Mammary epithelial cell (primary cell): ENCODE measurements at regions of chr18 and their contacts with region 1.

Region 1: DNA sequence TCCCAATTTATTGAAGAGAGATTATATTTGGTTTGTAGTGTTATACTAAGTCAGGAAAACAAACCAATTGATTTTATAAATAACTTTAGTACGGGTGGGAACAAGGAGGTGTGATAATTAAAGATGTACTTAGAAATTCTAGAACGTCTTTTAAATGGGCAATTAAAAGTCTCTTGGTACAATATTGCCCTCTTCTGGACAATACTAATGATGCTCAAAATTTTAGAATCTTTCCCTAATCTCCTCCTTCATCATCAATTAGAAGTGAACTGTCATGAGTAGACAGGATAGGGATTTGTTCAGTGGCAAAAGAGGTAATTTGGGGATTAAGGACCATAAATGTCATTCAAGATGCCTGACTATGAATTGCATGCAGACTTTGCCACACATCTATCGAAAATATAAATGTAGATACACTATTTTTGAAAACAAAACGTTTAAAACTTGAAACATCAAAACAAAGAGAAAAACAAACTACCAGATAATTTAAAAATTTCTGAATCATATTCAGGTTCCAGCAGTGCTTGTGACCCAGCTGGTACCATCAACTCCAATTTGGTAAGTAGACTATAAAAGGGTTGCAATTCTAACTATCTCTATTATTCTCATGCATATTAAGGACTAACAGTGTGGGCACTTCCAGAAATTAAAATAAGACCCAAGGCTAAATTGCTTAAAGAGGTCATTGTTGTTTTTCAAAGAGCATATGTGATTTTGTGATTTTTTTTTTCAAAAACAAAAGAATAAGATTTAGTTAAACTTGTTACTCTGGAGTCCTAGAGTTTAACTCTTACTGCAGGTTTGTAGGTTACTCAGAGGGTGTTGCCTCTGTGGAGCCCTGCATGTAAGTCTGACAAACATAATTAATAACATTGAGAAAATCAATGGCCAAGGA is 123.5 kb downstream of the LAMA3 start:
- DNase-seq: peak; percentile 36
- H3K4me3 ChIP-seq: no peak overlapping the region
- H3K27ac ChIP-seq: no peak overlapping the region
- H3K4me1 ChIP-seq: no peaks in the 10 kb centered on the region
- H3K27me3 ChIP-seq: no peaks in the 10 kb centered on the region
- CTCF ChIP-seq: peak; percentile 42 to 56

Region 2: DNA sequence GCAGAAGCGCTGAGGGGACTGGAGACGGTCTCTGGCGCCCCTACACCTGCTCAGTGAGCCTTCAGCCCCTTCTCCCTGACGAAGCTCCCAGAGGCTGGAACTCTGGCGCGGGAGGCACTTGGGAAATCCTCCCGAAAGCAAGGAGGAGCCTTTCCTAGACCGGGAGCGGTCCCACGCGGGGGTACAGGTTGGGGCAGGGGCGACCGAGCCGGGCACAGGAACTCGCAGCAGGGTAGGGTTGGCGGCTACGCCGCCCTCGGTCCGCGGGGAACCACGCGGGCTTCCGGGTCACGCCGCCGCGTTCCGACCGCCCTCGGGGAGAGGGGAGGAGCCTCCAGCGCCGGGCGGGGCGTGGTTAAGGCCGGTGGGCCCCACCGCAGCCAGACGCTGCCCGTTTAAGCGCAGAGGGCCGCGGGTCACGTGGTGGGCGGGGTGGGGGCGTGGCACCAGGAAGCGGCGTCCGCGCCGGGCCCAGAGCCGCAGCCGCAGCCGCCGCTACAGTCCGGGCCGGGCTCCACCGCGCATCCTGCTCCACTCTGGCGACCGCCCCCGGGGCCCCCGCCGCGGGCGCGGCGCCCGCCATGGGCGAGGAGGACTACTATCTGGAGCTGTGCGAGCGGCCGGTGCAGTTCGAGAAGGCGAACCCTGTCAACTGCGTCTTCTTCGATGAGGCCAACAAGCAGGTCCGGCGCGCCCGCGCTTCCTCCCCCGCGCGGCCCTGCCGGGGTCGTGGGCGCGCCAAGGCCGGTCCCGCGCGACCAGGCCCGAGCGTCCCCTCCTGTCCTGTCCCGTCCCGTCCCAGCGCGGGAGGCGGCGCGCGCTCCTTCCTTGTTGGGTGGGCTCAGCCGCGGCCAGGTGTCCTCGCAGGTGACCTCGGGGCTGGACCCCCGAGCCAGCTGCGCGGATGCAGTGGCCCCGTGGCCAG is 309.5 kb before region 1 on chr18 and contains the start of gene RMC1:
- CTCF ChIA-PET with region 1: no interaction called
- dilution Hi-C with region 1: no loop called
- in situ Hi-C with region 1: no loop called
- intact Hi-C with region 1: loop called (anchors 5 kb)
- DNase-seq: peak; percentile 90
- H3K4me3 ChIP-seq: peak within 1 kb of the TSS; percentile 75 to 87 (median 83)
- H3K27ac ChIP-seq: peak within 1 kb of the TSS; percentile 67
- H3K4me1 ChIP-seq: peaks cover 15% of the 10 kb centered on the region
- H3K27me3 ChIP-seq: no peaks in the 10 kb centered on the region
- CTCF ChIP-seq: peak in 1 of 2 donors; percentile 21
- total RNA-seq, gene RMC1: 29.8 to 33.3 TPM

Region 3: GRCh38 chr18:23619388-23619881 is 193.4 kb before region 1 on chr18:
- CTCF ChIA-PET with region 1: no interaction called
- dilution Hi-C with region 1: no loop called
- in situ Hi-C with region 1: loop called (anchors 10 kb)
- intact Hi-C with region 1: loop called (anchors 1 kb)
- DNase-seq: no peak
- H3K4me3 ChIP-seq: peak overlapping the region in 2 of 3 experiments; percentile 33 to 34
- H3K27ac ChIP-seq: no peak overlapping the region
- H3K4me1 ChIP-seq: peaks cover 8% of the 10 kb centered on the region
- H3K27me3 ChIP-seq: peaks cover 5% of the 10 kb centered on the region
- CTCF ChIP-seq: no peak

Region 4: DNA sequence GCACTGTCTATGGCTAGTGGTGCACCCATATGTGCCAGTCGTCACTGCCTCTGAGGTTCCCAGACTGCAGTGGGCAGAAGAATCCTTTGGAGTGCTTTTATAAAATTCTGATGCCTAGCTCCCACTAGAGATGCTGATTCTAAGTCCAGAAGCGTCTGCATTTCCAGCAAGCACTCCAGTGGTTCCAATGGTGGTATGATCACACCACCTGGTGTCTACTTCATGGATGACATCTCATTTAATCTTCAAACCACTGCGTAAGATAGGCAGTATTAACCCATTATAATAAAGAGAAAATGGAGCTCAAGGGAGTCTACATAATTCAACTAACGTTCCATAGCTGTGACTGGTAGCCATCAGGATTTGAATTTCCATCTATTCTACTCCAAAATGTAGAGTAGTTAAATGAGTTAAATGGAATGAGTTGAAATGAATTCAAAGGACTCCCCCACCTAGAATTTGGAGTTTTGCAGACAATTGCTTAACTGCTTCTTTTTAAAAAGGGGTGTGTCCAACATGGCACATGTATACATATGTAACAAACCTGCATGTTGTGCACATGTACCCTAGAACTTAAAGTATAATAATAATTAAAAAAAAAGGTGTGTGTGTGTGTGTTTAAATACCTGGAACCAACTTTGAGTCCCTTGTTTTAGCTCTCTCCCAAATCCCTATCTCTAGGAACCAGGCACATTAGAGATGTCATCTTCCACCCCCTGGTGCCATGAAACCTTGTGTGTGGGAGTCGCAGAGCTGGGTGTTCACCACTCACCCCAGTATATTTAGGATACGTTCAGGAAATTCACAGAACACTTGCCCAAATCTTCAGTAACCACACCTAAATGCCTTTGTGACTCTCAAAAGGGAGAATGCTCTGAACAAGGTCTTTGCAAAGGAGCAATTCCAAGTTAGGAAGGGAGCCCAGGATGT is 109.5 kb before region 1 on chr18:
- CTCF ChIA-PET with region 1: no interaction called
- dilution Hi-C with region 1: no loop called
- in situ Hi-C with region 1: no loop called
- intact Hi-C with region 1: loop called (anchors 1 kb)
- DNase-seq: peak; percentile 63
- H3K4me3 ChIP-seq: no peak overlapping the region
- H3K27ac ChIP-seq: no peak overlapping the region
- H3K4me1 ChIP-seq: no peaks in the 10 kb centered on the region
- H3K27me3 ChIP-seq: no peaks in the 10 kb centered on the region
- CTCF ChIP-seq: peak; percentile 54 to 72

Region 5: DNA sequence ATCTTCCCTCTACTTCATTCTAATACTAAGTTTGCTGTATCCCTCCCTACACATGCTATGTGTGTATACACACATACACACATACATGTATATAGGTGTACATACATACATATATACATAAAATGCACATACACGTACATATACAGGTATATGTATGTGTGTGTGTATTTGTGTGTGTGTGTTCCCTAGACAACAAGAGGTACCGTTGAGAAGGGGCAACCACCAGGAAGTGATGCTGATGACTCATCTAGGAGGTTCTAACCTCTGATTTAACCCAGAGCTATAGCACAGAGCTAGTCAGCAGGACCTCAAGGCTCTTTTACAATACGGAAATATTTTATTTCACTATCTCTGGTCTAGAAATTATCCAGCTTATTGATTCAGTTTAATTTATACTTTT is 15.6 kb after region 1 on chr18:
- CTCF ChIA-PET with region 1: no interaction called
- dilution Hi-C with region 1: no loop called
- in situ Hi-C with region 1: no loop called
- intact Hi-C with region 1: loop called (anchors 1 kb)
- DNase-seq: peak; percentile 93
- H3K4me3 ChIP-seq: peak overlapping the region in 1 of 3 experiments; percentile 36
- H3K27ac ChIP-seq: peak overlapping the region; percentile 100
- H3K4me1 ChIP-seq: peaks cover 55% of the 10 kb centered on the region
- H3K27me3 ChIP-seq: no peaks in the 10 kb centered on the region
- CTCF ChIP-seq: no peak